ENCODE measurements at regions of chr2 and their contacts with region 1.

Region 1: DNA sequence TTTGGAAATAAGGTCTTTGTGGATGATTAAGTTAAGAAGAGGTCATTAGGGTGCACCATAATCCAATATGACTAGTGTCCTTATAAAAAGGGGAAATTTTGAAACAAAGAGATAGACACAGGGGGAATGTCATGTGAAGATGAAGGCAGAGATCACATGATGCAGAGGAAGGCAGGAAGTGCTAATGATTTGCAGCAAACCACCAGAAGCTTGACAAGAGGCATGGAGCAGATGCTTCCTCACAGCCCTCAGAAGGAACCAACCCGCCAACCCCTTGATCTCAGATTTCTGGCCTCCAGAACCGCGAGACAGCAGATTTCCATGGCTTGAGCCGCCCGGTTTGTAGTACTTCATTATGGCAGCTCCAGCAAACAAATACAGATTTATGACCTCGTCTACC is 17.4 kb upstream of the SMARCAL1 start:
- DNase-seq: no peak
- H3K4me3 ChIP-seq: no peak overlapping the region
- H3K27ac ChIP-seq: no peak overlapping the region
- H3K4me1 ChIP-seq: no peaks in the 10 kb centered on the region
- H3K27me3 ChIP-seq: no peaks in the 10 kb centered on the region
- CTCF ChIP-seq: no peak

Region 2: DNA sequence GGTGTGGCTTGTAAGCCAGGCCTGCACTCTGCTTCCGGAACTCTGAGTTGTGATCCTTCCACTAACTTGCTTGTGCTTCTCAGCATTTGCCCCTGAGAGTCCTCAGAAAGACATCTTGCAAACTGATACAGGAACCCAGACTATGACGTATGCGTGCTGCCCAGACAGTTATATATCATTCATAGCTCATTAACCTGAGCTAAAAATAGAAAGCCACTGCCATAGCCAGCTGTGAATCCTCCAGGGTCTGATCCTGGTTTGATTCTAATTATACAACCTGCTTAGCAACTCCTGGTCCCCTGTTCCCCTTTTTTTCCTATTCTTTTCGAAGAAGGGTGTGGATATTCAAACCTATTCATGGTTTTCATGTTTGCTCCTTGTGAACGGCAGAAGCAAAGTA is 86.3 kb before region 1 on chr2:
- CTCF ChIA-PET with region 1: no interaction called
- dilution Hi-C with region 1: loop called (anchors 5 kb)
- in situ Hi-C with region 1: no loop called
- intact Hi-C with region 1: no loop called
- DNase-seq: no peak
- H3K4me3 ChIP-seq: no peak overlapping the region
- H3K27ac ChIP-seq: no peak overlapping the region
- H3K4me1 ChIP-seq: no peaks in the 10 kb centered on the region
- H3K27me3 ChIP-seq: no peaks in the 10 kb centered on the region
- CTCF ChIP-seq: no peak

Region 3: DNA sequence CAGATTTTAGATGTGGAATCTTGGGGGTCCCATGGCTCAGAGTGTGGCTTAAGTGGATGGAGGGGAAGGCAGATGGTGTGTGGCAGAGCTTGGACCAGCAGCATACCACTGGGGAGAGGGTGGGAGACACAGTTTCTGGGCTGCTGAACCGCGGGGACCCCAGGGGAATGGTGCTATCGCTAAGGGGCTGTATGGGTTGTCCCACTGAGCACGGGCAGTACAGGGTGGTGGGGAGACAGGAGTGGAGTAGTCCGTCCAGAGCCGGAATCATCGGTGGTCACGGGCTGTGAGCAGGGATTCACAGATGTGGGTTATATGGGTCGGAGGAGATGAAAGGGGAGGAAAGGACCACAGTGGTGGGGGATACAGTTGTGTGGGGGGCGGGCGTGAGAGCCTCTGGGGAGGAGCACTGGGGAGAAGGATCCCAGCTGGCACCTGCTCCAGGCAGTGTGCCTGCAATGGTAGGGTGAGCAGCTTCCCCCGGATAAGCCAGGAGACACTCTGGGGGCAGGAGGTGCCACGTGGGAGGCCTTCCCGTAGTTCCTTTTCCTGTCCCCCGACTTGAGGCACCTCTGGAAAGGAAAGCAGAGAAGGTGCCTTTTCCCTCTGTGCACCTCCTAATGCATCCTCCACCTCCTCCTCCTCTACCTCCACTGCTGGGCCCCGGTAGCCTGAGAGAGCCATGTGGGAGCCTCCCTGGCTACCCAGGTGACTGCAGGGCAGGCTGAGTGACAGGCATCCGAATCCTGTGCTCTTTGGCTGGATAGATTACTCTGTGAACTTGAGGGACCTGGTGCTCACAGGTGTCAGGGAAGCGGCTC is 275.6 kb after region 1 on chr2:
- CTCF ChIA-PET with region 1: no interaction called
- dilution Hi-C with region 1: no loop called
- in situ Hi-C with region 1: no loop called
- intact Hi-C with region 1: no loop called
- DNase-seq: no peak
- H3K4me3 ChIP-seq: no peak overlapping the region
- H3K27ac ChIP-seq: no peak overlapping the region
- H3K4me1 ChIP-seq: peaks cover 10% of the 10 kb centered on the region
- H3K27me3 ChIP-seq: no peaks in the 10 kb centered on the region
- CTCF ChIP-seq: no peak

Measured in mammary epithelial cell (primary cell).